ENCODE measurements at regions of chr14 and their contacts with region 1.

Region 1: DNA sequence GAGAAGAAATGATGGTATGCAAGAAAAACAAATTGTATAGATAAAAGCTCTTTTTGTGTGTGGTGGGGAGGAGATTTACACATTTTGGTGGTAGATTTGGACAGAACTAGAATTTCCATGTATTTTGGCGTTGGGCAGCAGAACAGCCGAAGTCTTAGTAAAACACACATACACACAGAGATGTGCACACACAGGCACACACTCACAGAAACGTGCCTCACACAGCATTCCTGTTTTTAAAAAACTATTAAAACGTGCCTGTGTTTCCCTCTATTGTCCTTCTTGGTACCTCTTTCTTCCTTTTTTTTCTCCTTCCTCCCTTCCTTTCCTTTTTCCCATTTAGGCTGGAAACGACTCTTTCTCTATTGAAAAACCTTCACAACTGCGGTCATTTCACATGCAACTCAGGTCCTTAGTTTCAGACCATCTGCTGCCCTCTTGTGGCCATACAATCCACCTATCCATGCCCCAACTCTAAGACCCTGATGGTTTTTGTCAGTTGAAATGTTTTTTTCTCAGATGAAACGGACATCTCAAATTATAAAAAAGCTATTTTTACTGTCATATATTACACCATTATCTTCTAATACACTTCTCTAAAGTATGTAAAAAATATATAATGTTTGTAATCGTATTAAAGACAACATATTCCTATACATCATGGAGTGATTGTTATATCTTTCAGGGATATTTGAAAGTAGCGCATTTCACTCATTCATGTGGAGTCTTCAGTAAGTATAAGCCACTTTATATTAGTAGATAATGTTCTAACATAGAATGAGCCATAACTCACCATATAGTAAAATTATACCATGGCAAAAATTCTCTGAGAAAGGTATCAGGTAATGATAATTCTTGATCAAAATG is 386.7 kb upstream of the NOVA1 start:
- DNase-seq: no peak
- ATAC-seq: peak; percentile 73

Region 2: DNA sequence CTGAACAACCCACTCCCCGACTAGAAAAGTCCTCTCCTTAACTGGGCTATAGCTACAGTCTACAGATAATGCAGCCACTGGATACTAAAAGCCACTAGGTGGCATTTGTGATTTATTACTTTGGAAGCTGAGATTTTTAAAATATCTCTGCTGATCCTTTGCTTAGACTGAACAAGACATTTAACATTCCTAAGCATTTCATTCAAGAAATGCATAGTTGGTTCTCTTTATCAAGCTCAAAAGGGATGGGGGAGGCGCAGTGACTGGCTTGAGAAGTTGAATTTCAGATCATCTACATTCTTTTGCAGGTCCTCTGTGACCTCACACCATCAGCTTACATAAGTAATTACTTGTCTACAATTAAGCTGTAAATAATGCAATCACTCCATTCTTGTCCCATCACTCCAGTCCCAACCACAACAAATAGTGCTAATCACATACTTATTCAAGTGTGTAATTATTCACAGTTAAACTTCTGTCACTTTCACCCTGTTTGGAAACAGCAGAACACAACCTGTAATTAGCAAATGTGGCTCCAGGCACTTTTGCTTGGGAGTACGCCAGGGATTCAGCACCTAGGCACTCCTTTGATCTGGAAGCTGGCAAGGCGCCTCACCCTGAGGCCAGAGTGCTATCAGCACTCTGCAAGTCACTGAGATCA is 590.3 kb before region 1 on chr14:
- intact Hi-C with region 1: loop called (anchors 5 kb)
- DNase-seq: no peak
- ATAC-seq: peak; percentile 41

Region 3: GRCh38 chr14:26905225-26905624 is 79.3 kb before region 1 on chr14:
- intact Hi-C with region 1: loop called (anchors 10 kb)
- DNase-seq: no peak
- ATAC-seq: no peak

Measured in Right ventricle myocardium inferior (tissue), 1 donor.